ENCODE measurements at regions of chr11 and their contacts with region 1.

Region 1: GRCh38 chr11:126440792-126441514 is 85.5 kb downstream of the ST3GAL4 start:
- DNase-seq: peak; percentile 73 to 91
- ATAC-seq: peak; percentile 84
- H3K4me3 ChIP-seq: no peak overlapping the region
- H3K27ac ChIP-seq: no peak overlapping the region
- H3K4me1 ChIP-seq: no peaks in the 10 kb centered on the region
- H3K27me3 ChIP-seq: no peaks in the 10 kb centered on the region

Region 2: DNA sequence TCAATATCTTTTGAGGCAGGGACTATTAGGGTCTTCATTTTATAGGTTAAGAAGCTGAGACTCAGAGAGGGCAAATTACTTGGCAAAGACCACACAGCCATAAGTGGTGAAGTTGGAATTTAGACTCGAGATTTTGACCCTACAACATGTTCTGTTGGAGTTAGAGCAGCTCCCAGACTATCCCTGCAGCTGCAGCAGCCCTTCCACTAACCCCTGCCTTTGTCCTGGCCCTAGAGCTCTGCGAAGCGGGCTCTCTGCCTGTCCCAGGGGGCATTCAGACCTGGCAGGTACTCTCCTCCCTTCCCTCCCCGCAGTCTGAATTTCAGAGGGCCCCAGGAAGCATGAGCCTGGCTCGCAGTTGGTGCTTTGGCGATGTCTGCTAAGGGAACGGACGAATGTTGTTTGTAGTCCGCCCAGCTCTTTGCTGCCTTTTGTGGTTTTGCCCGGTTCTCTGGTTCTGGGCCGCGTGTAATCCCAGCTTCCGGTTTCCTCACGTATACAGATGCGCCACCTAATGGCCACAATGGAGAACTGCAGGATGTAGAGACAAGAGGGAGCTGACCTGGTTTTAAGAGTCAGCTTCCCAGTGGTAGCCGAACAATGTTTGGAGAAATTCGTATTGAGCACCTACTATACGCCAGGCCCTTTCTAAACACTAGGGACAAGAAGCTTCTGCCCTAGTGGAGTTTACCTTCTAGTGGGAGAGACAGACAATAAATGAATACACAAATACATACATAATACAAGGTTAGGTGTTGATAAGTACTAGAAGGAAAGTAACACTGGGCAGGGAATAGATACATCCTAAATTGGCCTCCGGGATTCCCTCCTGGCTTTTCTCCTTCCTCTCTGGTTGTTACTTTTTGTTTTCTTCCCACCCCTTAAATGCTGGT is 39.7 kb after region 1 on chr11:
- intact Hi-C with region 1: loop called (anchors 2 kb)
- DNase-seq: peak; percentile 87
- ATAC-seq: peak; percentile 94
- H3K4me3 ChIP-seq: no peak overlapping the region
- H3K27ac ChIP-seq: peak overlapping the region in 1 of 2 donors; percentile 82
- H3K4me1 ChIP-seq: no peaks in the 10 kb centered on the region
- H3K27me3 ChIP-seq: no peaks in the 10 kb centered on the region

Region 3: DNA sequence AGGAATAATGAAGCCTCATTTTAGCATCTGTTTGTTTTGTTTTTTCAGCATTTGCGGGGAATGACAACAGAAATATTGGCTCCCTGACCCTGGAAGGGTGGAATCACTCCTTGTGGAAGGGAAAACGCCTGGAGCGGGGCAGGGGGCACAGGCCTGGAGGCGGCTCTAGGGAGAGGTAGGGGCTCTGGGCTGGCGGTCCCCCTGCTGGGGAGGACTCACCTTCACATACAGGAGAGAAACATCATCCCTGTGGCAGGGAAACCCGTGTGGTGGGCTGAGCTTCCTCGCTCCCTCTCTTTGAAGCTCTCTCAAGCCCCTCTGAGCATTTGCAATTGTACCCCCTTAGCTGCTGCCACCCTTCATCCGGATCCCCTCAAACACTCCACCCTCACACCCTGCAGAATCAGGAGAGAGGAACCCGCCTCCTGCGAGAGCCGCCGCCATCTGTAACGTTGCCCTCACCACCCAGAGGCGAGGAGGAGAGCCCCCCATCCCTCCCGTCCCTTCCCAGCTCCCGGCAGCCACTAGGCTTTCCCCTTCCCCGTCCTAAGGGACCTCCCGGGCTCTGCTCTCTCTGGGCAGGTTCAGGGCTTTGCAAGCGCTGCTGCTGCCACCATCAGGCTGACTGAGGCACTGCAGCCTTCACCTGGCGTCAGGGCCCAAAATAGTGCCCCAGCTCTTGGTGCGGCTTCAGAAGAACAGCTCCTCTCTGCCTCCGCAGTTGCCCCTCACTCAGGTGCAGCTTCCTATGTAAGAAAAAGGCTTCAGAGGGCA is 549.2 kb after region 1 on chr11:
- intact Hi-C with region 1: loop called in 1 of 2 experiments (anchors 5 kb)
- DNase-seq: peak; percentile 56 to 85
- ATAC-seq: peak; percentile 80
- H3K4me3 ChIP-seq: no peak overlapping the region
- H3K27ac ChIP-seq: no peak overlapping the region
- H3K4me1 ChIP-seq: no peaks in the 10 kb centered on the region
- H3K27me3 ChIP-seq: no peaks in the 10 kb centered on the region

Region 4: GRCh38 chr11:127345819-127346459 is 905.0 kb after region 1 on chr11:
- intact Hi-C with region 1: loop called in 1 of 2 experiments (anchors 5 kb)
- DNase-seq: no peak
- ATAC-seq: no peak
- H3K4me3 ChIP-seq: no peak overlapping the region
- H3K27ac ChIP-seq: no peak overlapping the region
- H3K4me1 ChIP-seq: no peaks in the 10 kb centered on the region
- H3K27me3 ChIP-seq: no peaks in the 10 kb centered on the region

Measured in aorta (tissue), 5 donors.